Left cardiac atrium (tissue), 4 donors: ENCODE measurements at regions of chr9 and their contacts with region 1.

Region 1: DNA sequence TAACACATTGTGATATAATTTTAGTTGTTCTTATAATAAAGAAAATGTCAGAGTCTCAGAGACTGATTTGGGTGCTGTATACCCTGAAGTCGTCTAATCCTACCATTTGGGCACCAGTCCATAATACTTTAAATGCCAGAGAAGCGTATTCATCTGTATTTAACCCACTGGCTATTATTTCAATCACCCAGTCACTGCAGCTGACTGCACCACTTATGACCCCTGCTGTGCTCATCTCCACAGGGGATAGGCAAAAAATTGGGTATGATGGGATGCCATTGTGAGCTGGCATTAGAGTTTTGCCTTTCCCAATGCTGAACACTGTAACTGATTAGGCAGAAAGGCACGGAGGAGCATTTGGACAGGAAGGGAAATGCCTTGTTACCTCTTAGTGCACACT is 599.7 kb downstream of the CAAP1 start:
- DNase-seq: no peak
- ATAC-seq: no peak

Region 2: GRCh38 chr9:26369093-26369492 is 76.2 kb after region 1 on chr9:
- intact Hi-C with region 1: loop called in 1 of 2 experiments (anchors 10 kb)
- DNase-seq: no peak
- ATAC-seq: no peak

Region 3: GRCh38 chr9:26437056-26437711 is 144.2 kb after region 1 on chr9:
- intact Hi-C with region 1: no loop called
- DNase-seq: no peak
- ATAC-seq: no peak